ENCODE measurements at regions of chr11 and their contacts with region 1.

Region 1: GRCh38 chr11:78432058-78432515 is 14.5 kb upstream of the GAB2 start:
- DNase-seq: no peak
- ATAC-seq: peak; percentile 37; the same call in 1 of the 2 replicates
- H3K4me3 ChIP-seq: no peak overlapping the region
- H3K27ac ChIP-seq: no peak overlapping the region
- H3K4me1 ChIP-seq: 0 out of 2 replicates have a peak, but pooled peaks cover 2% of the 10 kb centered on the region
- H3K27me3 ChIP-seq: no peaks in the 10 kb centered on the region
- CTCF ChIP-seq: peak; percentile 40
- POLR2A ChIP-seq: no peak
- RAD21 ChIP-seq: no peak

Region 2: GRCh38 chr11:78100676-78101456 is 331.2 kb before region 1 on chr11:
- CTCF ChIA-PET with region 1: no interaction called
- POLR2A ChIA-PET with region 1: interaction called, 17 read pairs
- dilution Hi-C with region 1: no loop called
- in situ Hi-C with region 1: no loop called
- intact Hi-C with region 1: no loop called
- DNase-seq: peak; percentile 54
- ATAC-seq: peak; percentile 86
- H3K4me3 ChIP-seq: no peak overlapping the region
- H3K27ac ChIP-seq: peak overlapping the region; percentile 50; the same call in 1 of the 2 replicates
- H3K4me1 ChIP-seq: peaks cover 4% of the 10 kb centered on the region
- H3K27me3 ChIP-seq: no peaks in the 10 kb centered on the region
- CTCF ChIP-seq: no peak
- POLR2A ChIP-seq: no peak
- RAD21 ChIP-seq: no peak

Region 3: GRCh38 chr11:78499971-78500370 is 67.9 kb after region 1 on chr11:
- CTCF ChIA-PET with region 1: interaction called, 3 read pairs
- POLR2A ChIA-PET with region 1: no interaction called
- dilution Hi-C with region 1: no loop called
- in situ Hi-C with region 1: no loop called
- intact Hi-C with region 1: loop called (anchors 5 kb)
- DNase-seq: peak; percentile 52
- ATAC-seq: no peak
- H3K4me3 ChIP-seq: no peak overlapping the region
- H3K27ac ChIP-seq: no peak overlapping the region
- H3K4me1 ChIP-seq: peaks cover 5% of the 10 kb centered on the region; the same call in 1 of the 2 replicates
- H3K27me3 ChIP-seq: no peaks in the 10 kb centered on the region
- CTCF ChIP-seq: no peak
- POLR2A ChIP-seq: no peak
- RAD21 ChIP-seq: no peak

Region 4: GRCh38 chr11:79212741-79213190 is 780.7 kb after region 1 on chr11:
- CTCF ChIA-PET with region 1: no interaction called
- POLR2A ChIA-PET with region 1: no interaction called
- dilution Hi-C with region 1: no loop called
- in situ Hi-C with region 1: no loop called
- intact Hi-C with region 1: no loop called
- DNase-seq: no peak
- ATAC-seq: no peak
- H3K4me3 ChIP-seq: no peak overlapping the region
- H3K27ac ChIP-seq: no peak overlapping the region
- H3K4me1 ChIP-seq: no peaks in the 10 kb centered on the region; the same call in 1 of the 2 replicates
- H3K27me3 ChIP-seq: no peaks in the 10 kb centered on the region
- CTCF ChIP-seq: no peak
- POLR2A ChIP-seq: no peak
- RAD21 ChIP-seq: no peak

Measured in IMR-90 (cell line).